GM12878 (cell line): ENCODE measurements at regions of chr6 and their contacts with region 1.

Region 1: GRCh38 chr6:8888468-8888867 is 453.1 kb upstream of the SLC35B3 start:
- DNase-seq: no peak
- ATAC-seq: peak; percentile 68
- H3K4me3 ChIP-seq: no peak overlapping the region
- H3K27ac ChIP-seq: no peak overlapping the region
- H3K4me1 ChIP-seq: no peaks in the 10 kb centered on the region
- H3K27me3 ChIP-seq: no peaks in the 10 kb centered on the region
- CTCF ChIP-seq: peak; percentile 23 to 47 (median 32); a peak in 4 of 6 replicates
- EP300 ChIP-seq: no peak
- POLR2A ChIP-seq: no peak
- RAD21 ChIP-seq: peak; percentile 16; the same call in 1 of the 2 replicates

Region 2: DNA sequence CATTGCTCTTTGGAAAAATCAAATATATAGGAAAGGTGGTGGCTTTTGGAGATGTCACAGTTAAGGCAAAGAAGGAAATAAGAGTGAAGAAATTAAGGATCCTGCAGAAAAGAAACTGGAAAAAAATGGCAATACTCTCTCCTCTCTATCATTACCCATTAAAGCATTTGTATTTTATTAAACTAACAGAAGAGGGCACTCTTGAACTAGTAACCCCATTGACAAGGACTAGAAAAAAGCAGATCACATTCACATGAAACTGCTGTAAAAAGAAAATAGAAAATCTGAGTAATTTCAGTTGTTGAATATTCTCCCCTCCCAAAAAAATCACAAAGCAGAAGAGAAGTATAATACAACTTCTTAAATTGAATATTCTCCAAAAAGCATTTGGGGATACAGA is 349.0 kb before region 1 on chr6:
- CTCF ChIA-PET with region 1: no interaction called
- POLR2A ChIA-PET with region 1: no interaction called
- RAD21 ChIA-PET with region 1: no interaction called
- SMC1A ChIA-PET with region 1: no interaction called
- in situ Hi-C with region 1: no loop called
- intact Hi-C with region 1: loop called (anchors 1 kb)
- DNase-seq: no peak
- ATAC-seq: peak; percentile 66
- H3K4me3 ChIP-seq: no peak overlapping the region
- H3K27ac ChIP-seq: no peak overlapping the region
- H3K4me1 ChIP-seq: no peaks in the 10 kb centered on the region
- H3K27me3 ChIP-seq: no peaks in the 10 kb centered on the region
- CTCF ChIP-seq: peak; percentile 14 to 29 (median 29); a peak in 2 of 6 replicates
- EP300 ChIP-seq: no peak
- POLR2A ChIP-seq: no peak
- RAD21 ChIP-seq: peak; percentile 66